ENCODE measurements at regions of chr21 and their contacts with region 1.

Region 1: DNA sequence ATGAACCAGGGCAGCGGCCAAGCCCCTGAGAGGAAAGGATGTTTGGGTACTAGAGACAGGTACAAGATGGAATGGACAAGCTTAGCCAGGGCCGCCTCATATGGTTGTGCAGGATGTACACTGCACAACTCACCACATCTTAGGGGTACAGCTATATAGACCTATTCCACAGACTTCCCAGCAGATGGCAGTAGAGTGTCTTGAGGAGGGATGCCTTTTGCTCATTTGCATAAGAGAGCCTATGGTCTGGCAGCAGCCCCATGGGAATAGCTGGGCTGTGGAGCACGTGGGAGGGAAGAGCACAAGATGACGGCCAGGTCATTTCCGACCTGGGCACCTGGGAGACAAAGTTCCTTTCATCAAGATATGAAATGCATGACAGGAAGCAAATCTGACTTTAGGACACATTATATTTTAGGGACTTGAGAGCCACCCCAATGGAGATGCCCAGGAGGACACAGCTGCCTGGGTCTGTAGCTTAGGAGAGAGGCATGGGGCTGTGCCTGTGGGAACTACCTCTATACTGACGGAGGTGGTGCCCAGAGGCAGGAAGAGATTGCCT is 215.5 kb downstream of the KCNJ6 start:
- DNase-seq: peak; percentile 15
- ATAC-seq: peak; percentile 94
- H3K4me3 ChIP-seq: no peak overlapping the region
- H3K27ac ChIP-seq: no peak overlapping the region
- H3K4me1 ChIP-seq: no peaks in the 10 kb centered on the region
- H3K27me3 ChIP-seq: no peaks in the 10 kb centered on the region
- CTCF ChIP-seq: peak; percentile 73

Region 2: DNA sequence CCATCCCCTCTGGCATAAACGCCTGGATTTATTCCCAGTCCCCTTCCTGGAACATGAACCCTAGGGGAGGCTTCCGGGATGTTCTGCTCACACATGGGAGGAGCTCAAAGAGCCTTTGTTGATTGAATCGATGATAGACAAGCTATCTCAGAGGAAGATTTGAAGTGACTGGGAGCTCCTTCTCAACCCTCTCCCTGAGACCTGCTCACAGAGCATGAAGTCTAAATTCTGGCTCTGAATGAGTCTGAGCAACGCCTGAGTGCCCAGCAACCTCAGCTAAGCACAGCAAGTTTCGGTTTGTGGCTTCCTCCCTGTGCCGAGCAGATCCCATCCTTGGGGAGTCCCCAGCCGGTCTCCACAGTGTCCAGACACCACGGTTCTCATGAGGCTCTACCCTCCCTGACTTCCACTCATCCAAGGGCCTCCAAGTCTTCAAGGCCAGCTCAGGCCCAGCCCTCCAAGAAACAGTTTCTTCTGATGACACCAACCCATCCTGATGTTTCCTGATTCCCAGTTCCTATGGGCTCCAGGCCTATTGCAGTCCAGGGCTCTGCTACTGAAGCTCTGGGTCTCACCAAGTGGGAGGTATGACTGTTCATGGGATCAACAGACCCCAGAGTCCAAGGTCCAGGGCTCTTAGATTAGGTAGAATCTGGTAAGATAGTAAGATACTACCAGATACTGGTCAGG is 143.3 kb before region 1 on chr21:
- CTCF ChIA-PET with region 1: interaction called, 11 read pairs
- POLR2A ChIA-PET with region 1: no interaction called
- in situ Hi-C with region 1: no loop called
- intact Hi-C with region 1: no loop called
- DNase-seq: no peak
- ATAC-seq: no peak
- H3K4me3 ChIP-seq: no peak overlapping the region
- H3K27ac ChIP-seq: no peak overlapping the region
- H3K4me1 ChIP-seq: peaks cover 5% of the 10 kb centered on the region
- H3K27me3 ChIP-seq: no peaks in the 10 kb centered on the region
- CTCF ChIP-seq: no peak

Region 3: DNA sequence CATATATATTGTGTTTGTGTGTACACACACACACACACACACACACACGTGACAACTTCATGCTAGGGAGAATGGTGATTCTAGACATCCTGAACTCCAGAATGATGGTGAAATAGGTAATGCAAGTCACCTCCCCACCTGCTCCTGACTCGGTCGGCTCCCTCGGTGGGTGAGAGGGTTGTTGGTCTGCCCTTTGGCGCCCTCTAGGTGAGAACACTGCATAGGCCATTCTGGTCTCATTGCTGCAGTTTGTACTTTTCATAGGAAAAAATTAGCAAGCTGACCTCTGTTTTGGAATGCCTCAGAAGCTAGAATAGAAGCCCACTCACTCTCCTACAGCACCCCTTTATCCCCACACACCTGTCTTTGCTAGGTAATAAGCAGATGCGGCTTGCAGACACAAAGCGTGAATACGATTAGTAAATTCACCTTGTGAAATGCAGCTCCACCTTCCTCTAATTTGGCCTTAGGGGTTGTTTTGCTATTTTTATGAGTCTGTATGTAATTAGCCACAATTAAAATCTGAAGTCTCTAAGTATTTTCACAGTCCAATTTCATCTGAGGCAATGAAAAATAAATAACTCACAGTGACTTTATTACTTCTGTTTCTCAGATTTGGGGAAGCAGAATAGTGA is 426.1 kb after region 1 on chr21:
- CTCF ChIA-PET with region 1: no interaction called
- POLR2A ChIA-PET with region 1: no interaction called
- in situ Hi-C with region 1: no loop called
- intact Hi-C with region 1: loop called (anchors 5 kb)
- DNase-seq: peak; percentile 36
- ATAC-seq: 0 out of 2 replicates have a peak, but pooled peaks have one; percentile 68
- H3K4me3 ChIP-seq: no peak overlapping the region
- H3K27ac ChIP-seq: no peak overlapping the region
- H3K4me1 ChIP-seq: no peaks in the 10 kb centered on the region
- H3K27me3 ChIP-seq: no peaks in the 10 kb centered on the region
- CTCF ChIP-seq: peak; percentile 82

Measured in Panc1 (cell line).